PC-3 (cell line): ENCODE measurements at regions of chr3 and their contacts with region 1.

Region 1: DNA sequence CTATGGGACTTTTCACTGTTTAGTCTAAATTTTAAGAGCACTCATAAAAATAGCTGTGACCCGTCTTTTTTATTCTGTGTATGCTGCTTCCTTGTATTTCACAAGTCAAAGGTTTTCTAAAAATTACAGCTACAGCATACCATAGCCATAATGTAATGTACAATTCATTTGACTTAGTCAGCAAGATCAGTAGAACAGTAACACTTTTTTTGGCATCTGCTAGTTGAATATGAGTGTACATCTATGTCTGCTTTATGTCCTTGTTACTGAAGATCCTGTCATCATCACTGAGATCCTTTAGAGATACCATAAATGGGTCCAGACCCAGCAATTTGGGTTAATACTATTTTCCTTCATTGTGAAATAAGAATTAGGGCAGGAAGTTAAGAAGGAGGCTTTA is 42.2 kb downstream of the CMSS1 start:
- DNase-seq: peak; percentile 93
- ATAC-seq: peak; percentile 70
- H3K4me3 ChIP-seq: no peak overlapping the region
- H3K27ac ChIP-seq: peak overlapping the region; percentile 49
- H3K4me1 ChIP-seq: peaks cover 49% of the 10 kb centered on the region
- H3K27me3 ChIP-seq: no peaks in the 10 kb centered on the region
- CTCF ChIP-seq: no peak

Region 2: DNA sequence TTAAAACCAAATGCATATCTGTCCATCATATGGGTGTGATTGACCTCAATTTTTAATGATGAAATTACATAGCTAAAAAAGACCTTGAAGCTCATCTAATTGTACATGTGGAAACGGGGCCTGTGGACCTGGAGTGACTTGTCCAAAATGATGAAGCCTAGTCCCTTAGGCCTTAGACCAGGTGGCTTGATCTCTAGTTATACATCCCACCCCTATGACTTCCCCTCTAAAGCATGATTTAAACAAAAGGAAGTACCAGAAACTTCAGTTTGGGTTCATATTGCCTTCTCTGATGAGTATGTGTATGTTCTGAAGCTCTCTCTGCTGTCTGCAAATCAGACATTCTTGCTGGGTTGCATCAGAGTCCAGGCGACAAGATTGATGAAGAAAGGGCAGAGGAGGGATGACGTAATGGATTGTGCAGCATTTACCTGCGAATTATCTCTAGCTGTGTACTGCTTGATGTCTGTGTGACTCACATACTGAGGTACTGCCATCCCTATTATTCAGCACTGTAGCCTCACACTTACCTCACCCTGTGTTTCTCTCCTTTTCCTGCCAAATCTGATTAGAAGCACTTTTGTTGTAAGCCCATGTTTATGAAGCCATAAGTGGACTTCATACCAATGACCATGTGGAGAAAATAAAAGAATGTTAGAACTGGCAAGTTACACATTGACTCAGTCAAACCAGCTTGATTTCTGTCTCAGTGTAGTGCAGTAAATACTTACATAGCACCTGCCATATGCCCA is 142.9 kb after region 1 on chr3:
- CTCF ChIA-PET with region 1: no interaction called
- POLR2A ChIA-PET with region 1: no interaction called
- intact Hi-C with region 1: loop called (anchors 5 kb)
- DNase-seq: peak; percentile 91
- ATAC-seq: peak; percentile 89
- H3K4me3 ChIP-seq: no peak overlapping the region
- H3K27ac ChIP-seq: 0 out of 2 replicates have a peak overlapping the region, but pooled peaks have one; percentile 9
- H3K4me1 ChIP-seq: peaks cover 39% of the 10 kb centered on the region
- H3K27me3 ChIP-seq: no peaks in the 10 kb centered on the region
- CTCF ChIP-seq: no peak